Activated CD4-positive, alpha-beta T cell treated with anti-CD3 and anti-CD28 coated beads, Interleukin-2, amount 10 ng/mL, durations not matched to agents 24 days and 14 days (primary cell): ENCODE measurements at regions of chr5 and their contacts with region 1.

Region 1: GRCh38 chr5:128201065-128201926 is 117.7 kb downstream of the SLC12A2 start:
- DNase-seq: peak; percentile 96
- H3K4me3 Mint-ChIP-seq: peak overlapping the region; percentile 60
- H3K27ac Mint-ChIP-seq: no peak overlapping the region
- H3K4me1 Mint-ChIP-seq: peaks cover 18% of the 10 kb centered on the region
- H3K27me3 Mint-ChIP-seq: peaks cover 5% of the 10 kb centered on the region

Region 2: GRCh38 chr5:127564002-127564769 is 637.1 kb before region 1 on chr5:
- intact Hi-C with region 1: loop called (anchors 1 kb)
- DNase-seq: peak; percentile 83
- H3K4me3 Mint-ChIP-seq: no peak overlapping the region
- H3K27ac Mint-ChIP-seq: no peak overlapping the region
- H3K4me1 Mint-ChIP-seq: peaks cover 8% of the 10 kb centered on the region
- H3K27me3 Mint-ChIP-seq: peaks cover 25% of the 10 kb centered on the region

Region 3: GRCh38 chr5:127746756-127747155 is 454.5 kb before region 1 on chr5:
- intact Hi-C with region 1: loop called (anchors 1 kb)
- DNase-seq: no peak
- H3K4me3 Mint-ChIP-seq: no peak overlapping the region
- H3K27ac Mint-ChIP-seq: no peak overlapping the region
- H3K4me1 Mint-ChIP-seq: no peaks in the 10 kb centered on the region
- H3K27me3 Mint-ChIP-seq: peaks cover 7% of the 10 kb centered on the region

Region 4: DNA sequence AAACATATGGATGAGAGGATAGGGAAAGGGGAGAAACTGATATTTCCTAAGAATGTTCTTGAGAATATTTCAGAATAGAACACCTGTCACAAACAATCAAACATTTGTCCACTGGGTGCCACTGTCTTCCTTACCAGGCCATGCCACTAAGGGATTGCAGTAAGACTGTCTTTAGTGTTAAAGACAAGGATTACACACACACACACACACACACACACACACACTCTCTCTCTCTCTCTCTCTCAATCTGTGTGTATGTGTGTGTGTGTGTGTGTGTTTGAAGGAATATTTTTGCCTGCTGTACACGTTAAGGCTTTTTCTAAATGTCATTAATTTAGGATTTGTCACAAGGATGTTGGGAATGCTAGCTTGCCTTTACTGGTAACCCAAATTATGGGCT is 443.7 kb before region 1 on chr5:
- intact Hi-C with region 1: loop called (anchors 1 kb)
- DNase-seq: peak; percentile 79
- H3K4me3 Mint-ChIP-seq: no peak overlapping the region
- H3K27ac Mint-ChIP-seq: no peak overlapping the region
- H3K4me1 Mint-ChIP-seq: no peaks in the 10 kb centered on the region
- H3K27me3 Mint-ChIP-seq: peaks cover 11% of the 10 kb centered on the region

Region 5: GRCh38 chr5:127875235-127876021 is 325.9 kb before region 1 on chr5:
- intact Hi-C with region 1: loop called (anchors 2 kb)
- DNase-seq: peak; percentile 56
- H3K4me3 Mint-ChIP-seq: no peak overlapping the region
- H3K27ac Mint-ChIP-seq: no peak overlapping the region
- H3K4me1 Mint-ChIP-seq: no peaks in the 10 kb centered on the region
- H3K27me3 Mint-ChIP-seq: peaks cover 6% of the 10 kb centered on the region

Region 6: DNA sequence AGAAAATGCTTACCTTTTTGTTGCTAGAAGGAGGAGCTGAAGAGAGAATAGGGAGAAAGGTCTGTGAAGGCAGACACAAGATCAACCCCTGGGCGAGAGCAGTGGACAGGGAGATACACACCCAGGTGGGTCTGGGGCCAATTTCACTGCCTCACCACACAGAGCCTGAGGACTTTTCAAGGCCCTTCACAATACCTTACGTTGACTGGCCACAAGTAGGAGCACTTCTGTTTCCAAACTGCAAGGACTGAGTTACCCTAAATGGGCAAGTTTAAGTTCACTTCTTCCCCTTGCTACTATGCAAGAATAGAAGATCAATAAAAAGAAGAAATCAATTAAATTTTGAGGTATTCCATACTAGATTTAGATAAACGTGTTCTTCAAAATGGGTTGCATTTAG is 292.2 kb before region 1 on chr5:
- intact Hi-C with region 1: loop called (anchors 10 kb)
- DNase-seq: peak; percentile 62
- H3K4me3 Mint-ChIP-seq: no peak overlapping the region
- H3K27ac Mint-ChIP-seq: no peak overlapping the region
- H3K4me1 Mint-ChIP-seq: peaks cover 5% of the 10 kb centered on the region
- H3K27me3 Mint-ChIP-seq: peaks cover 13% of the 10 kb centered on the region

Region 7: GRCh38 chr5:127975935-127976334 is 225.4 kb before region 1 on chr5:
- intact Hi-C with region 1: no loop called
- DNase-seq: no peak
- H3K4me3 Mint-ChIP-seq: no peak overlapping the region
- H3K27ac Mint-ChIP-seq: no peak overlapping the region
- H3K4me1 Mint-ChIP-seq: no peaks in the 10 kb centered on the region
- H3K27me3 Mint-ChIP-seq: no peaks in the 10 kb centered on the region

Region 8: GRCh38 chr5:128174951-128175350 is 26.3 kb before region 1 on chr5:
- intact Hi-C with region 1: no loop called
- DNase-seq: no peak
- H3K4me3 Mint-ChIP-seq: no peak overlapping the region
- H3K27ac Mint-ChIP-seq: no peak overlapping the region
- H3K4me1 Mint-ChIP-seq: no peaks in the 10 kb centered on the region
- H3K27me3 Mint-ChIP-seq: no peaks in the 10 kb centered on the region